Right ventricle myocardium inferior (tissue), 1 donor: ENCODE measurements at regions of chr2 and their contacts with region 1.

Region 1: GRCh38 chr2:207334624-207335371 is 169.1 kb upstream of the KLF7 start:
- DNase-seq: no peak
- ATAC-seq: peak; percentile 55

Region 2: GRCh38 chr2:207046724-207047123 is 288.1 kb before region 1 on chr2:
- intact Hi-C with region 1: loop called (anchors 10 kb)
- DNase-seq: no peak
- ATAC-seq: peak; percentile 76

Region 3: DNA sequence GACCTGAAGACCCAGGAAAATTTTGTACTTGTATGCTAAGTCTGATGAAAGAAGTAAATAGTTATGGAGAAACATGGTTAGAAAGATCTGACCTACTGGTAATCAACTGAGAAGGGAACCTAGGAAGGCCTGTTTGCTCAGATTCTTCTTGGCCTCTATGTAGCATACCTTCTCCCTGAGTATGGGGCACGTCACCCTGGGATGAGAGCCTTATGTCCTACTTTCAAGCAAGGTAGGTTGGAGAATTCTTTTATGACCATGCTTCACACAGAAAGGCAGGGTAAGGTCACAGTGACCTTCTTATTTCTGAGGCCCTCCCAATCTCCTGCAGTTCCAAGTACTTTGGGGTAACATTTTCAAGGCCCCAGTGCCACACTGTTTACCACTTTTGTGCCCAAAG is 16.4 kb after region 1 on chr2:
- intact Hi-C with region 1: no loop called
- DNase-seq: no peak
- ATAC-seq: no peak